ENCODE measurements at regions of chr18 and their contacts with region 1.

Region 1: DNA sequence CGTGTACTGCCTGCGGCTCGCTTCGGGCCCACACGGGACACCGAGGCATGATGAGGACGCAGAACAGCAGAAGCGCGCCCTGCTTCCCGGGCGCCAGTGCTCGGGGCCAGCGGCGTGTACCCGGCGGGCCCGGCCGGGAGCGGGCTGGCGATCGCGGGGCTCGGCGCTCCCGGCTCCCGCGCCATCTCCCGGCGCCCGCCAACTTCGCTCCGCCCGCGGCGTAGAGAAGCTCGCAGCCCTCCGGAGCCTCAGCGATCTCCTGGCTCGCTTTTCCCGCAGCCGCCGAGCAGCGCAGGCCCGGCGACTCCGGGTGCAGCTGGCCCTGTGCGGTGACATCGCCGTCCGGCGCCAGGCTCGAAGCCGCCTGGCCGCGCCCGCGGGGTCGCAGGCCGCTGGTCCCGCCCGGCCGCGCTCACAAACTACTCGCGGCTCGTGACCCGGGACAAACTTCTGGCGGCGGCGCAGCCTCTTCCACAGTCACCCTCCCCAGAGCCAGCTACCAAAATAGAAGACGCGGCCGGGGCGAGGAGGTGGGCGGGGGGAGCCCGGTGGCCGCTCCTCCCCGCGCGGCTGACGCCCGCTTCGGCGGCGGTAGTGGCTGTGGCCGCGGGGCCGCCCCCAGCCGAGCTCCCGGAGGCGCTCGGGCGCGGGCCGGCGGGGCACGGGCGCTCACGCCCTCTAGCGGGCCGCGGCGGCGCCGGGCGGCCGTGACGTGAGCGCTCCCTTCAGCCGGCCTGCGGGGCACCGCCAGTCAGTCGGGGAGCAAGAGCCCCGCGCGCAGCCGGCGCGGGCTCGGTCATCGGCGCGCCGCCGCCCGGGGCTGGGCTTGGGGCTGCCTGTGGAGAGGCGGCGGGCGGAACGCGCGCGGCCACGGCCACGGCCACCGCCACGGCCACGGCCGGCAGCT is at the start of gene PTPRM:
- DNase-seq: peak; percentile 78 to 87 (median 86)
- H3K4me3 ChIP-seq: peak within 1 kb of the TSS; percentile 70 to 91 (median 80)
- H3K27ac ChIP-seq: peak within 1 kb of the TSS in 1 of 2 experiments; percentile 74
- H3K4me1 ChIP-seq: peaks cover 0 to 23% (median 19%) of the 10 kb centered on the region in 4 experiments
- H3K27me3 ChIP-seq: peaks cover 0 to 28% (median 0%) of the 10 kb centered on the region in 5 experiments

Region 2: DNA sequence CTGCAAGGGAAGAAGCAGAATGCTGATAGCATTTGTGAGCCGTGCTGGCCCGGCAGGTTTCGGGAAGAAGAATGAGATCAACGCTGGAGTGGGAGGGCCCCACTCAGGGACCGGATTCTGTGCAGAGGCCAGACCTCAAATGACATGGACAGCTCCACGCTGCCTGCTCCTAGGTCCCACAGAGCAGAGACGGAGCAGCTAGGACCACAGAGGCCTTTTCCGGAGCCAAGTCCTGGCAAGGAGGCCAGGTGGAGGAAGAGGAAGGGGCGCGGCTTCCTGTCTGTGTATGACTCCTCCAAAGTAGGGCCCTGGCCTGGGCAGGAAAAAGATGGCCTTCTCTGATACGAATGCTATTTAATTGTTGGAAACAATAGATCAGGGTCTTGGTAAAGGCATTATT is 196.0 kb before region 1 on chr18:
- CTCF ChIA-PET with region 1: interaction called, 28 read pairs
- POLR2A ChIA-PET with region 1: interaction called, 3 read pairs
- DNase-seq: peak; percentile 82 to 92 (median 86)
- H3K4me3 ChIP-seq: peak overlapping the region in 3 of 7 experiments; percentile 22 to 46 (median 30)
- H3K27ac ChIP-seq: peak overlapping the region in 1 of 2 experiments; percentile 72
- H3K4me1 ChIP-seq: peaks cover 8 to 80% (median 67%) of the 10 kb centered on the region in 4 experiments
- H3K27me3 ChIP-seq: no peaks in the 10 kb centered on the region

Region 3: GRCh38 chr18:7467710-7468466 is 98.9 kb before region 1 on chr18:
- CTCF ChIA-PET with region 1: no interaction called
- POLR2A ChIA-PET with region 1: no interaction called
- DNase-seq: no peak
- H3K4me3 ChIP-seq: no peak overlapping the region
- H3K27ac ChIP-seq: no peak overlapping the region
- H3K4me1 ChIP-seq: peaks cover 0 to 17% (median 3%) of the 10 kb centered on the region in 4 experiments
- H3K27me3 ChIP-seq: no peaks in the 10 kb centered on the region

Region 4: GRCh38 chr18:7830468-7830867 is 263.6 kb after region 1 on chr18:
- CTCF ChIA-PET with region 1: no interaction called
- POLR2A ChIA-PET with region 1: no interaction called
- DNase-seq: peak in 2 of 3 donors; percentile 4 to 8
- H3K4me3 ChIP-seq: no peak overlapping the region
- H3K27ac ChIP-seq: no peak overlapping the region
- H3K4me1 ChIP-seq: no peaks in the 10 kb centered on the region
- H3K27me3 ChIP-seq: no peaks in the 10 kb centered on the region